ENCODE measurements at regions of chr5 and their contacts with region 1.

Region 1: DNA sequence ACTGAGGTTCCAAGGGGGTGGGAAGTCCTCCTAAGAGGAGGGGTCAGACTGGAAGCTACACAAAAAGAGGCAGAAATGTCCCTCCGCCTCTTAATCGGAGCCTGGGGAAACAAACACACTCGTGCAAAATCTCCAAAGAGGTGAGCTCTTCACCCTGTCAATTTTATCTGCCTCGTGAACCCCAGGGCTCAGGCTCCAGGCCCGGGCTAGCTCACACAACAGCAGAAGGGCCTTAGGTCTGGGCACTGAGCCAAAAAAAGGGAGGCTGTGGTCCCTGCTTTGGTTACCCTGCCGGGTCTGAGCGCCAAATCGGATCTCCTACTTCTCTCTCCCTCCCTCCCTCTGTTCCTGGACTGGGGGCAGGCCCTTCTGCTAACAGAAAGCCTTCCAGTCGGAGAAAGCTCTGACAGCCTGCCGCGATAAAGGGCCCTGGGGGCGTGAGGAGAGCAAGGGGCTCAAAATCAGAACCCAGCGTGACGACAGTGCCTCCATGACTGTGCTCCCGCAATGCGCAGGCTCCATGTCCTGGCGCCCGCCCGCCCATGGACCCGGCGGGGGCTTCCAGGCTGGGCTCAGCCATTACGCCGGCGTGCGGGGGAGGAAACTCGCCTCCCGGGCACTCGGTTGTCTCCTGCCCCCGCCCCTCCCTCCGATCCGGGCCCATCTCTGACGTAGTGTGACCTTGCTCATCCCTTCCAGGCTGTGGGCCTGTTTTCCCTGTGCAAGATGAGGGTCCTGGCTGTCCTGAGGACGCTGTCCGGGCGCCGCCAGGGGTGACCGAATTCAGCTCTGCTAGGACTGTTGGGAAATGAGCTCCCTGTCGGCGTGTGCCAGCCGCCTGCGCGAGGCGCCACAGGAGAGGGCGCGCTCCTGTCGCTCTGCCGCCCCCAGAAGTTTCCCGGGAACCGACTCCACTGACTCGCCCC is 865 bp upstream of the SLC22A4 start:
- DNase-seq: peak; percentile 95
- H3K4me3 ChIP-seq: peak overlapping the region; percentile 61 to 80
- H3K27ac ChIP-seq: peak overlapping the region; percentile 94
- H3K4me1 ChIP-seq: peaks cover 15% of the 10 kb centered on the region
- H3K27me3 ChIP-seq: no peaks in the 10 kb centered on the region
- CTCF ChIP-seq: peak in 2 of 3 experiments; percentile 4 to 26
- POLR2A ChIP-seq: no peak

Region 2: DNA sequence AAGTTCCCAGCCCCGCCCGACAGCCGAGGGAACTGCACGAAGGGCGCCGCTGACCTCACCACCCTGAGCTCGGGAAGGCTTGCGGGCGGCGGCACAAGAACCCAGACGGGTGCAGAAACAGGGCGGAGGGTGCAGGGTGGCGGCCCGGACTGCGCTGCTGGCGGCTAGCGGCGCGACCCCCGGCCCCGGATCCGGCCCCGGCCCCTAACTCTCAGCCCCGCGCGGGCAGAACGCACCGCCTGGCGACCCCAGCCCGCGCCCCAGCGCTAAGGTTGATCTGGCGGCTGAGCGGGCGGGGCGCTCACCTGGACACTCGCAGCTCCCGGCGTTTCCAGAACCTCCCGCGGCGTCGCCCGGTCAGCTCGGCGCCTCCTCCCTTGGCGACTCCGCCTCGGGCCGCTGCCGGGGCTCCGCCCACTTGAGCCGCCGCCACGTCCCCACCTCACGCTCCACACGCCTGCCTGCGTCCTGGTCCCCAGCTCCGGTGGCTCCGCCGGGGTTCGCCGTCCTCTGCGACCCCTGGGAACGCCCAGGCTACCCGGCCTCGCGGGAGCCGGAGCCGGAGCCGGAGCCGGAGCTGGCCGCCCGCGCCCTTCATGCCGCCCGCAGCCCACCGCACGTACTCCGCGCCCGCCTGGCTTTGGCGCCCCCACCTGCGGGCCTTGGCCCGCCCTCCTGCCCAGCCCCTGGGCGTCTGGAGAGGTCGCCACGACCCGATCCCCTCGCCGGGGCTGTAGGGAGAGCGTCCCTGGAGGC is 65.7 kb before region 1 on chr5 and contains the start of gene P4HA2:
- intact Hi-C with region 1: loop called (anchors 10 kb)
- DNase-seq: peak in 1 of 2 donors; percentile 87
- H3K4me3 ChIP-seq: peak within 1 kb of the TSS; percentile 74 to 79
- H3K27ac ChIP-seq: peak within 1 kb of the TSS; percentile 98
- H3K4me1 ChIP-seq: peaks cover 51% of the 10 kb centered on the region
- H3K27me3 ChIP-seq: no peaks in the 10 kb centered on the region
- CTCF ChIP-seq: peak in 1 of 3 experiments; percentile 3
- POLR2A ChIP-seq: peak in 1 of 2 donors; percentile 47
- total RNA-seq, gene P4HA2: 42.0 TPM

Region 3: DNA sequence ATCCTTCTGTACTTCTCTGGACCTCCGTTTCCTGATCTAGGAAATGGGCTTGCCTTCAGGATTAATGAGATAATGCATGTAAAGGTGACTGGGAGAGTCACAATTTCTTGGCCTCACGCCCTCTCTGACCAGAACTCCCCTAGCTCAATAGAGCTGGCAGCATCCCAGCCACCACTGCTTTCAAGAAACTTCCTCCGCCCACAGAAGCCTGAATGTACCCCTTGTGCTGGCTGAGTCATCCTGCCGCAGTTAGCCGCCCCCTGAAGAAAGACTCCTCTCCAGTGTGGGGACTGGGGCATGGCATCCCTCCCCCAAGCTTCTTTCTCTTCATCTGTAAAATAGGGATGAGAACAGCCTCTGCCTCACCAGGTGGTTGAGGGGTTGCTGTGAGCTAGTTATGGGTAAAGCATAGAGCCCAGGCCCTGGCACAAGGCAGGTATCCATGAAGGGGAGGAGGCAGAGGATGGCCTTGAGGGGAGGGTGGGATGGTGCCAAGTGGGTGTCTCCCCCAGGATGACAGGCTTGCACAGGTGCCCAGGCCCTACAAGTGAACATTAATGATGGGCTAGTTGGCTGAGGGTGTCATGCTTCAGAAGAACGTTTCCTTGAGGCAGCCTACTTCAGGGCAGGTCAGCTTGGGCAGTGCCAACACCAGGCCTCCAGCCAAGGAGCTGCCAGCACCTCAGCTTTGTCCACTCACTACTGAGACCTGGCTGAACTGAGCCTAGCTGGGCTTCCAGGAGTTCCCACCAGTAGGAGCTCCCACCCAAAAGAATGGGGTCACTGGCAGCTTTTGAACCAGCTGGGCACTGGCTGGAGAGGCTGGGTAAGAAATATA is 32.4 kb before region 1 on chr5:
- intact Hi-C with region 1: loop called (anchors 2 kb)
- DNase-seq: peak in 1 of 2 donors; percentile 87
- H3K4me3 ChIP-seq: no peak overlapping the region
- H3K27ac ChIP-seq: peak overlapping the region; percentile 99
- H3K4me1 ChIP-seq: peaks cover 94% of the 10 kb centered on the region
- H3K27me3 ChIP-seq: no peaks in the 10 kb centered on the region
- CTCF ChIP-seq: no peak
- POLR2A ChIP-seq: no peak

Region 4: GRCh38 chr5:132369474-132370180 is 76.3 kb after region 1 on chr5 and contains the start of gene SLC22A5:
- intact Hi-C with region 1: loop called (anchors 10 kb)
- DNase-seq: peak in 1 of 2 donors; percentile 91
- H3K4me3 ChIP-seq: peak within 1 kb of the TSS; percentile 58 to 74
- H3K27ac ChIP-seq: peak within 1 kb of the TSS; percentile 87
- H3K4me1 ChIP-seq: peaks cover 38% of the 10 kb centered on the region
- H3K27me3 ChIP-seq: no peaks in the 10 kb centered on the region
- CTCF ChIP-seq: no peak
- POLR2A ChIP-seq: no peak
- total RNA-seq, gene SLC22A5: 15.2 TPM